Breast epithelium (tissue), 4 donors: ENCODE measurements at regions of chr4 and their contacts with region 1.

Region 1: GRCh38 chr4:116302990-116303735 is 782.2 kb downstream of the TRAM1L1 start:
- DNase-seq: no peak
- H3K4me3 ChIP-seq: no peak overlapping the region
- H3K27ac ChIP-seq: no peak overlapping the region
- H3K4me1 ChIP-seq: no peaks in the 10 kb centered on the region
- H3K27me3 ChIP-seq: no peaks in the 10 kb centered on the region
- CTCF ChIP-seq: no peak
- POLR2A ChIP-seq: no peak

Region 2: GRCh38 chr4:116005037-116005805 is 297.9 kb before region 1 on chr4:
- intact Hi-C with region 1: no loop called
- DNase-seq: no peak
- H3K4me3 ChIP-seq: no peak overlapping the region
- H3K27ac ChIP-seq: no peak overlapping the region
- H3K4me1 ChIP-seq: no peaks in the 10 kb centered on the region
- H3K27me3 ChIP-seq: no peaks in the 10 kb centered on the region
- CTCF ChIP-seq: no peak
- POLR2A ChIP-seq: no peak

Region 3: GRCh38 chr4:116453127-116453526 is 150.0 kb after region 1 on chr4:
- intact Hi-C with region 1: loop called (anchors 5 kb)
- DNase-seq: no peak
- H3K4me3 ChIP-seq: no peak overlapping the region
- H3K27ac ChIP-seq: no peak overlapping the region
- H3K4me1 ChIP-seq: no peaks in the 10 kb centered on the region
- H3K27me3 ChIP-seq: no peaks in the 10 kb centered on the region
- CTCF ChIP-seq: no peak
- POLR2A ChIP-seq: no peak

Region 4: GRCh38 chr4:116515959-116516358 is 212.8 kb after region 1 on chr4:
- intact Hi-C with region 1: no loop called
- DNase-seq: no peak
- H3K4me3 ChIP-seq: no peak overlapping the region
- H3K27ac ChIP-seq: no peak overlapping the region
- H3K4me1 ChIP-seq: no peaks in the 10 kb centered on the region
- H3K27me3 ChIP-seq: no peaks in the 10 kb centered on the region
- CTCF ChIP-seq: no peak
- POLR2A ChIP-seq: no peak

Region 5: DNA sequence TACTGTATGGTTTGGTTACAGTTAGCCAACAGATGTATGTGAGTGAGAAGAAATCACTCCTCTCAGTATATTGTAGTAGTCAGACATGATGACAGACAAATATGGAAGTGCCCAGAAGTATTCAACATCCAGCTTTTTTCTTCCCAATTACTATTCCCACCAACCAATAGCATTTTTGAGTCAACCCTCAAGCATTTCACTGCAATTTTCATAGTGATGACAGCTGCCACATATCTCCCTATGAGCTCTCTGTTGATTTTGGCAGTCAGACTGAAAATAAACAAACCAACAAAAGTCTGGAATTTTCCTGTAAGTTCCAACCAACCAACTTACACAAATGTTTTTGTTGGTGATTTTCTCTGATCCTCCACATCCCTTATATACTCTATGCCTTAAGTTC is 790.4 kb after region 1 on chr4:
- intact Hi-C with region 1: no loop called
- DNase-seq: no peak
- H3K4me3 ChIP-seq: no peak overlapping the region
- H3K27ac ChIP-seq: no peak overlapping the region
- H3K4me1 ChIP-seq: no peaks in the 10 kb centered on the region
- H3K27me3 ChIP-seq: no peaks in the 10 kb centered on the region
- CTCF ChIP-seq: no peak
- POLR2A ChIP-seq: no peak